Mammary epithelial cell (primary cell): ENCODE measurements at regions of chr17 and their contacts with region 1.

Region 1: DNA sequence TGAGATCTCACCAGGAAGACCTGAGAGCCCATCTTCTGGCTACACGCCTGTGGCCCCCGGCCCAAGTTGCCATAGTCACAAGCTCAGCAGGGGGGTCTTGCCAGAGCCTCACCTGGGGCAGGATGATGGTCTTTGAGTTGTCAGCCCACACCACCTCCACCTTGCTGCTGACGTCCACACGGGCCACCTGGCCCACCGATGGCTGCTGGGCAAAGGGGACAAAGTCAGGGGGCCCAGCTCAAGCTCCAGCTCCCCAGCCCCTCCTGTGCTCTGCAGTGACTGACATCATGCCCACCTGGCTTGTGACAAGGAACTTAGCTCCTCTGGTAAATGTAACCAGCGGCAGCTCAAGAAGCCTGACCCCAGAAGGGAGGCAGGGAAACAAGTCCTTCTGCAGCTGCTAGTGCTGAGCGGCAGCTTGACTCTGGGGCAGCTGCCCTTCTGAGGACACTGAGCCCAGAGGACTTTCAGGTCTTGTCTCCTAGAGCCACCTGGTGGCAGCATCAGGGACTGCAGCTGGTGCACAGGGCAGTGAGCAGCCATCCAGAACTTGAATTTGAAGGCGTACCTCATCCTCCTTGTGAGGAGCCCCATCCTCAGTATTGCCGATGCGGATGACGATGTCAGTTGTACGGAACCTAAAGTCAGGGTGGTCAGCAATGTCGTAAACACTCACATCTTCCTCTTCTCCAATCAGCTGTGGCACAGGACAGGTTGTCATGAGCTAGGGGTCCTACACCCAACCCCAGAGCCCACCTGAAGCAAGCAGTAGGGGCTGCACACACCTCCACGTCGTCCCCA is 13.5 kb downstream of the SPHK1 start:
- DNase-seq: peak; percentile 70
- H3K4me3 ChIP-seq: no peak overlapping the region
- H3K27ac ChIP-seq: no peak overlapping the region
- H3K4me1 ChIP-seq: peaks cover 28% of the 10 kb centered on the region
- H3K27me3 ChIP-seq: no peaks in the 10 kb centered on the region
- CTCF ChIP-seq: peak; percentile 97

Region 2: DNA sequence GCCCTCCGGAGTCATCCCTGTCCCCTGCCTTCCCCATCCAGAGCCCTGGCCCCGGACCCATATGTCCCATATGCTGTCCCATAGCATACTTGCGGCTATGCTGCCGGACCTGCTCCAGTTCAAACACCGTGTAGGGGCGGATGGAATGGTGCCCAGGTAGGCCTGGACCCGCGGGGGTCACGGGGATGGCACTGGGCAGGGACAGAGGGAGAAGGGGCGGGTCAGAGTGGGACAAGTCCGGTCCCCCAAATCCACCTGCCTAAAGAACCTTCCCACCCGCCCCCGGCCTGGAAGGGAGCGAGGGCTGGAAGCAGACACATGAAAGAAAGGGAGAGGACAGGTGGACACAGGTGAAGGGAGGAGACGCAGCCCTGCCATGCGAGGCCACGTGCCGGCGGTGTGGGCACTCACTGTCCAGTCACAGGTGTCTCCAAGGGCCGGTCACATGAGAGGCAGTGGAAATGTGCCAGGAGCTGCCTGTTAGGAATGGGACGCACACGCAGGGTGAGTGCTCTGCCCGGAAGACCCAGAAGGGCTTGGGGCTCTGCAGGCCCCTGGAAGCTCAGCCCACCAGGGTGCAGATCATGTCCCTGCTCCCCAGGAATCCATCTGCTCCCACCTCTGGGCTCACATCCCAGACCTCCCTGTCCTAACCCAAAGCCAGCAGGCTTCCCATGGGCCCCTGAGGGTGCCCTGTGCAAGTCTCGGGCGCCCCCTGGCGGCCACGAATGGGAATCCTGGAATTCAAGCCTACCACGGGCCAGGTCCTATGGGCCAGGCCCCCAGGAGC is 118.7 kb before region 1 on chr17:
- CTCF ChIA-PET with region 1: no interaction called
- dilution Hi-C with region 1: no loop called
- in situ Hi-C with region 1: no loop called
- intact Hi-C with region 1: no loop called
- DNase-seq: peak; percentile 51
- H3K4me3 ChIP-seq: no peak overlapping the region
- H3K27ac ChIP-seq: no peak overlapping the region
- H3K4me1 ChIP-seq: peaks cover 4% of the 10 kb centered on the region
- H3K27me3 ChIP-seq: no peaks in the 10 kb centered on the region
- CTCF ChIP-seq: peak; percentile 72 to 99

Region 3: DNA sequence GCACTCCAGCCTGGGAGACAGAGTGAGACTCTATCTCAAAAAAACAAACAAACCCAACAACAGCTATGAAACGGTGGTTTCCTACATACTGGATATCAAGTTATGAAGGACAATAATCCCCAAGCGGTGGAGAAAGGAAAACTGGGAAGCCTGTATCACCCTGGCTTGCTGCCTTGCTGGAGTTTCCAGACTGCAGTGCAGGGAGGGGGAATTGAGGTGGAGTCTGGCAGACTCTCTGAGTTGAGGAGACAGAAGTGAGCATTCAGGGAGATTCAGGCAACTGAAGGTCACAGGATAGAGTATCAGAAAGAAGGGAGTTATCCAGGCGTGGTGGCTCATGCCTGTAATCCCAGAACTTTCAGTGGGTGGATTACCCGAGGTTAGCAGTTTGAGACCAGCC is 101.7 kb before region 1 on chr17:
- CTCF ChIA-PET with region 1: interaction called, 4 read pairs
- dilution Hi-C with region 1: loop called (anchors 5 kb)
- in situ Hi-C with region 1: loop called in 1 of 2 experiments (anchors 5 kb)
- intact Hi-C with region 1: no loop called
- DNase-seq: no peak
- H3K4me3 ChIP-seq: no peak overlapping the region
- H3K27ac ChIP-seq: no peak overlapping the region
- H3K4me1 ChIP-seq: no peaks in the 10 kb centered on the region
- H3K27me3 ChIP-seq: no peaks in the 10 kb centered on the region
- CTCF ChIP-seq: no peak

Region 4: DNA sequence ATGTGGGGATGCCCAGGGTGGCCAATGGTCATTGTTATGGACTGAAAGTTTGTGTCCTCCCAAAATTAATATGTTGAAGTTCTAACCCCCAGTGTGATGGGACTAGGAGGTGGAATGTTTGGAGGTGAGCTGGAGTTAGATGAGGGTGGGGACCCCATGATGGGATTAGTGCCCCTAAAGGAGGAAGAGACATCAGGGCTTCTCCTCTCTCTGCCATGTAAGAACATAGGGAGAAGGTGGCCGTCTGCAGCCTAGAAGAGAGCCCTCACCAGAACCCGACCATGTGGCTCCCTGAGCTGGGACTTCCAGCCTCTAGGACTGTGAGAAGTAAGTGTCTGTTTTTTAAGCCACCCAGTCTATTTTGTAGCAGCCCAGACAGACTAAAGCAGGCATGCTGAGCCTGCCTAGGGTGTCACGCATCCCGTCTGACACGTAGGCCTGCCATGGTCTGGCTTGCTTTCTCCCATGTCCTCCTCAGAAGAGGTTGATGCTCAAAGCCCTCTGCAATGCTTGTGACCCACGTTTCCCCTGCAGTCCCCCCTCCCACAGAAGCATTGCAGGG is 40.2 kb before region 1 on chr17:
- CTCF ChIA-PET with region 1: no interaction called
- dilution Hi-C with region 1: no loop called
- in situ Hi-C with region 1: no loop called
- intact Hi-C with region 1: no loop called
- DNase-seq: no peak
- H3K4me3 ChIP-seq: no peak overlapping the region
- H3K27ac ChIP-seq: no peak overlapping the region
- H3K4me1 ChIP-seq: peaks cover 19% of the 10 kb centered on the region
- H3K27me3 ChIP-seq: no peaks in the 10 kb centered on the region
- CTCF ChIP-seq: no peak

Region 5: GRCh38 chr17:76370261-76370993 is 27.5 kb before region 1 on chr17:
- CTCF ChIA-PET with region 1: interaction called, 5 read pairs
- dilution Hi-C with region 1: no loop called
- in situ Hi-C with region 1: no loop called
- intact Hi-C with region 1: loop called (anchors 1 kb)
- DNase-seq: peak; percentile 95
- H3K4me3 ChIP-seq: no peak overlapping the region
- H3K27ac ChIP-seq: peak overlapping the region; percentile 91
- H3K4me1 ChIP-seq: peaks cover 43% of the 10 kb centered on the region
- H3K27me3 ChIP-seq: no peaks in the 10 kb centered on the region
- CTCF ChIP-seq: peak; percentile 62

Region 6: DNA sequence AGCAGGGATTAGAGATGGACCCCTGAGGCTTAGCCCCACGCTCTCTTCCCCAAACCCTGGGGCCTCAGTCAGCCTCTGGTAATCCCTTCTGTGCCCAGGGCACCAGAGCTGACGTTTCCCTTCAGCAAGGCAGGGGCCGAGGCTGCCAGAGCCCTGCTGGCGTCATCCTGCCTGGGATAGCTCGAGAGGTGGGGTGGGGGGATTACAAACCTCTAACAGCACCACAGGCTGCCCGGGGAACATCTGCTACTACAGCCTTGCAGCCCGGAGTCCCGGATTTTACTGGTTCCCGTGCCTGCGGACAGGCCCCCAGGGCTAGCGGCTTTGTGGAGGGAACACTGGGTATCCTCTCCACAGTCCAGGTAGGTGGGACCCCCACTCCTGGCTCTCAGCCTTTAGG is 69.5 kb after region 1 on chr17 and contains the start of gene AANAT:
- CTCF ChIA-PET with region 1: no interaction called
- dilution Hi-C with region 1: loop called (anchors 5 kb)
- in situ Hi-C with region 1: no loop called
- intact Hi-C with region 1: no loop called
- DNase-seq: no peak
- H3K4me3 ChIP-seq: no peak within 1 kb of the TSS
- H3K27ac ChIP-seq: no peak within 1 kb of the TSS
- H3K4me1 ChIP-seq: no peaks in the 10 kb centered on the region
- H3K27me3 ChIP-seq: no peaks in the 10 kb centered on the region
- CTCF ChIP-seq: no peak
- total RNA-seq, gene AANAT: not detected